SK-N-SH (cell line): ENCODE measurements at regions of chr3 and their contacts with region 1.

Region 1: DNA sequence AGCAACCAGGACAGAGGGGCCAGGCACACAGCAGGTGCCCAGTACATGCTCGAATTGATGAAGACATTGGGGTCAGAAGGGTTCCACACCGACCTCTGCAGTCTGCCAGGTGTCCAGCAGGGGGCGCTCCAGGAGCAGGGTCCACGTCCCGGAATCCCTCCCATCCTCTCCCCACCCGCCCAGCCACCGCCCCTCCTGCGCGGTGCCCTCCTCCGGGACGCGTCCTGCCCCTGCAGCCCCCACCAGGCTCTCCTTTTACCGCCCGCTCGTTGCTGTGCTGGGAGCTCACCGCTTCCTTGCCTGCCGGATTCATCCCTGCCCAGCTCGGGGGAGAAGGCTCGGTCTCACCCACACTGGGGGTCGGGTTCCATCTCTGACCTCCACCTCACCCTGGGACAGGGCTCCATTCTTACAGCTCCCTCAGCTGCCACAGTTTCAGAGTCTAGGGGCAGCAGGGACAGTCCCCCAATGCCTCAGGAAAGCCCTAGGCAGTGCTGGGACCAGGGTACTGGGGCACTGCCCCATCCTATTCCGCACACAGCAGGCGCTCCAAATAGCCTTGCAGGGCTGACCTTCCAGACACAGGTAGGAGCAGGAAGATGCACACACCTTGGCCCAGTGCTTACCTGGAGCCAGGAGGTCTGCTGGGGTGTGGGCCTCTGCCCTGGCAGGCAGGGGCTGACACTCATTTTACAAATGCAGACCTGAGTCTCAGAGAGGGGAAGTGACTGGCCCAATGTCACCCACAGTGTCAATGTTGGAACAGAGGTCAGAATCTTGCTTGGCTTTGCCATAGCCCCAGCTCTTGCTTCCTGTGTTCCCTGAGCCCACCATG is 31.0 kb downstream of the GRIP2 start:
- DNase-seq: peak; percentile 94
- H3K4me3 ChIP-seq: peak overlapping the region in 1 of 2 experiments; percentile 27; a peak in 2 of 4 replicates
- H3K27ac ChIP-seq: no peak overlapping the region
- H3K4me1 ChIP-seq: peaks cover 0 to 14% of the 10 kb centered on the region in 2 experiments; a peak in 1 of 4 replicates
- H3K27me3 ChIP-seq: no peaks in the 10 kb centered on the region
- CTCF ChIP-seq: peak; percentile 74
- EP300 ChIP-seq: no peak
- RAD21 ChIP-seq: peak; percentile 82

Region 2: GRCh38 chr3:14480207-14481025 is 28.8 kb before region 1 on chr3:
- CTCF ChIA-PET with region 1: interaction called, 15 read pairs
- POLR2A ChIA-PET with region 1: no interaction called
- DNase-seq: peak; percentile 53
- H3K4me3 ChIP-seq: no peak overlapping the region
- H3K27ac ChIP-seq: peak overlapping the region in 1 of 2 experiments; percentile 41; a peak in 1 of 4 replicates
- H3K4me1 ChIP-seq: peaks cover 0 to 14% of the 10 kb centered on the region in 2 experiments; a peak in 1 of 4 replicates
- H3K27me3 ChIP-seq: no peaks in the 10 kb centered on the region
- CTCF ChIP-seq: no peak
- EP300 ChIP-seq: no peak
- RAD21 ChIP-seq: no peak

Region 3: GRCh38 chr3:14525685-14526631 is 16.8 kb after region 1 on chr3:
- CTCF ChIA-PET with region 1: interaction called, 38 read pairs
- POLR2A ChIA-PET with region 1: no interaction called
- DNase-seq: no peak
- H3K4me3 ChIP-seq: no peak overlapping the region
- H3K27ac ChIP-seq: no peak overlapping the region
- H3K4me1 ChIP-seq: no peaks in the 10 kb centered on the region
- H3K27me3 ChIP-seq: no peaks in the 10 kb centered on the region; the same call in 1 of the 2 replicates
- CTCF ChIP-seq: no peak
- EP300 ChIP-seq: no peak
- RAD21 ChIP-seq: no peak

Region 4: DNA sequence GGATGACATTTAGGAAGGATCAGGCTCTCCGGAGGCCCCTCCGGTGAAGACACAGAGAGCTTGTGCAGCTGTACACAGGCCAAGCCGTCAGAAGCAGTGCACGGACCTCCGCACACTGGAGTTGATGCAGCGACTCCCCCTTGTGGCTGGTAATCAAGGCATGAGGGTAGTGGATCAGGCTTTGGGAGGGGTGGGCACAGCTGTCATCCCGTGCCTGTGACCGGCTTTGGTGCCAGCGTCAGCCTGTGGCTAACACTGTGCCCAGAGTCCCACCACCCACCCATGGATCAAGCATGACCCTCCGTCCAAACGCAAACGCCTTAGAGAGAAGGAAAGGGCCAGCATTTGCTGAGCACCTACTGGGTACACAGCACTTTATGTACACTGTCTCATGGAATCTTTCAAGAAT is 39.1 kb after region 1 on chr3:
- CTCF ChIA-PET with region 1: interaction called, 183 read pairs
- POLR2A ChIA-PET with region 1: interaction called, 3 read pairs
- DNase-seq: peak; percentile 89
- H3K4me3 ChIP-seq: no peak overlapping the region
- H3K27ac ChIP-seq: no peak overlapping the region
- H3K4me1 ChIP-seq: peaks cover 0 to 18% of the 10 kb centered on the region in 2 experiments; a peak in 1 of 4 replicates
- H3K27me3 ChIP-seq: no peaks in the 10 kb centered on the region; the same call in 1 of the 2 replicates
- CTCF ChIP-seq: peak; percentile 66
- EP300 ChIP-seq: no peak
- RAD21 ChIP-seq: peak; percentile 85

Region 5: GRCh38 chr3:14915636-14916222 is 406.6 kb after region 1 on chr3:
- CTCF ChIA-PET with region 1: interaction called, 16 read pairs
- POLR2A ChIA-PET with region 1: no interaction called
- DNase-seq: no peak
- H3K4me3 ChIP-seq: no peak overlapping the region
- H3K27ac ChIP-seq: no peak overlapping the region
- H3K4me1 ChIP-seq: peaks cover 0 to 26% of the 10 kb centered on the region in 2 experiments; a peak in 1 of 4 replicates
- H3K27me3 ChIP-seq: peaks cover 9% of the 10 kb centered on the region; the same call in 1 of the 2 replicates
- CTCF ChIP-seq: no peak
- EP300 ChIP-seq: no peak
- RAD21 ChIP-seq: peak; percentile 63